Adrenal gland (tissue), 19 donors: ENCODE measurements at regions of chr17 and their contacts with region 1.

Region 1: DNA sequence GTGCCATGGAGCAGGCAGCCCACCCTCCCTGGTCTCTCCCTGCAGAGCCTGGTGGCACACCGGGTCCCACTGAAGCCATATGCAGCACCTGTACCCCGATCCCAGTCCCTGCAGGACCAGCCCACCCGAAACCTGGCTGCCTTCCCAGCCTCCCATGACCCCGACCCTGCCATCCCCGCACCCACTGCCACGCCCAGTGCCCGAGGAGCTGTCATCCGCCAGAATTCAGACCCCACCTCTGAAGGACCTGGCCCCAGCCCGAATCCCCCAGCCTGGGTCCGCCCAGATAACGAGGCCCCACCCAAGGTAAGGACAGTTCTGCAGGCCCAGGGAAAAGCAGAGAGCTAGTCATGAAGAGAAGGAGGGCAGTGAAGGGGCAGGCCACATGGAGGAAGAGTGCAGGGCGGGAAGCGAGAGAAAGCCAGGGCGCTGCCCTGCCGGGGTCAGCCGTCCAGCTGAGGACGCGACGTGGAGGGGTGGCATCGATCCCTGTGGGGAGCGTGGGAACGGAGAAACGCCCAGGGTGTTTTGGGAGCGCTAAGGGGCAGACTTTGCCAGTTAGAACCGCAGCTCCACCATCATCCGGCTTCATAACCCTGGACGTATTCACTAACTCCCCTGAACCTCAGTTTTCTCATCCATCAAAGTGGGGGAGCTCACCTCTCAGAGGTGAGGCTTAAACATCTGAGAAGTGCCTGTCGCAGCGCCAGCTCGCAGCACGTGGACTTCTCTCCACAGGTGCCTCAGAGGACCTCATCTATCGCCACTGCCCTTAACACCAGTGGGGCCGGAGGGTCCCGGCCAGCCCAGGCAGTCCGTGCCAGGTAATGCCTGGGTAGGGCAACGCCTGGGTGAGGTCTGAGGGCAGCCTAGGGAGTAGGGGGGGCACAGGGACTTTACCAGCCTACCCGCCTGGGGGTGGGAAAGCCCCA is 7.7 kb upstream of the C17orf107 start:
- DNase-seq: no peak
- H3K4me3 ChIP-seq: no peak overlapping the region
- H3K27ac ChIP-seq: no peak overlapping the region
- H3K4me1 ChIP-seq: no peaks in the 10 kb centered on the region
- H3K27me3 ChIP-seq: no peaks in the 10 kb centered on the region
- CTCF ChIP-seq: no peak
- POLR2A ChIP-seq: no peak

Region 2: DNA sequence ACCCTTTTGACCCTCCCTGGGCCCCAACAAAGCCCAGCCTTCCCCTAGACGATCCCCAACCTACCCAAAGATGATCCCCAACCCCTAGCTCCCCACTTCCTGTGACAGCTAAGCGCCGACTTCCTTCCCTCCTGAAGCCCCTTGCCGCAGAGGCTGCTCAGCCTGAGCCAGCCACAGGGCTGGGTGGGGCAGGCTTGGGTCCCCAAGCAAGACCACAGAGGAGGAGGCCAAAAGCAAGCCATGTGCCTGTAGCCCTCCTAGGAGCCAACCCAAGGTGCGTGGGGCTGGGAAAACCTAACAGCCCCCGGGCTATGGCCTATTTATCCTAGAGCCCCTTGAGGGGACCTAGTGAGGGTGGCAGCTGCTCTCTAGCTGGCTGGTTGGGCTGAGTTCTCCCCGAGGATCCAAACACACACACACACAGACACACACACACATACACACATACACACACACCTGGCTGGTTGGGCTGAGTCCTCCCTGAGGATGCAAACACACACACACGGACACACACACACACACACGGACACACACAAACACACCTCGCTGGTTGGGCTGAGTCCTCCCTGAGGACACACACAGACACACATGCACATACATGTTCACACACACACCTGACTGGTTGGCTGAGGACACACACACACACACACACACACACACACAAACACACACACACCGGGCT is 176.5 kb before region 1 on chr17:
- intact Hi-C with region 1: loop called (anchors 5 kb)
- DNase-seq: no peak
- H3K4me3 ChIP-seq: no peak overlapping the region
- H3K27ac ChIP-seq: peak overlapping the region in 2 of 5 donors; percentile 6 to 8
- H3K4me1 ChIP-seq: peaks cover 6 to 11% of the 10 kb centered on the region in 2 donors
- H3K27me3 ChIP-seq: no peaks in the 10 kb centered on the region
- CTCF ChIP-seq: no peak
- POLR2A ChIP-seq: no peak